ENCODE measurements at regions of chr14 and their contacts with region 1.

Region 1: DNA sequence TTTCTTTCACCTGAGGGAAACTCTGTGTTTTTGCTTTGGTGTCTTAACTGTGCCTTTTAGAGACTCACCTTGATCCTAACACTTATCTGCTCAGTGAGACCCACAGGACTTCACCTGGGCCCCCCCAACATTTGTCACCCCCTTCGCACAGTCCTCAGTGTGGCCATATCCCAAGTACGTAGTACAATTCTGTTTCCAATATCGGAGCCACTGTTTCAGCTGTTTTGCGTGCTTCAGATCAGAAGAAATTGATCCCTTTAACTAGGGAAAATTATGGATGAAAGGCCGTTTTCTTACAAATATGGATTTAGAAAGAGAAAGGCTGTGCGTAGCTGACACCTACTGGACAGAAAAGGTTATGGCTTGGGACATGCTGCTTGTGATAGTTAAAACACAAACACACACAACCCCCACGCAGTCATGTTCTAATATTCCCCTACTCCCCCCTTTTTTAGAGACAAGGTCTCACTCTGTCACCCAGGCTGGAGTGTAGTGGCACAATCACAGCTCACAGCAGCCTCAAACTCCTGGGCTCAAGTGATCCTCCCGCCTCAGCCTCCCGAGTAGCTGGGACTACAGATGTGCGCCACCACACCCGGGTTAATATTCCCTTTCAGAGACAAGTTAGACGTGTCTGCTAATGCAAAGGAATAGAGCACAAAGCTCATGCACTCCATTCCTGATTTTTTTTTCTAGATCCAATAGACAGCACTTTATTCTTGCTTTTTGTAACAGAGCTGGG is 3.6 kb upstream of the SLC7A8 start:
- DNase-seq: no peak
- ATAC-seq: peak; percentile 57

Region 2: DNA sequence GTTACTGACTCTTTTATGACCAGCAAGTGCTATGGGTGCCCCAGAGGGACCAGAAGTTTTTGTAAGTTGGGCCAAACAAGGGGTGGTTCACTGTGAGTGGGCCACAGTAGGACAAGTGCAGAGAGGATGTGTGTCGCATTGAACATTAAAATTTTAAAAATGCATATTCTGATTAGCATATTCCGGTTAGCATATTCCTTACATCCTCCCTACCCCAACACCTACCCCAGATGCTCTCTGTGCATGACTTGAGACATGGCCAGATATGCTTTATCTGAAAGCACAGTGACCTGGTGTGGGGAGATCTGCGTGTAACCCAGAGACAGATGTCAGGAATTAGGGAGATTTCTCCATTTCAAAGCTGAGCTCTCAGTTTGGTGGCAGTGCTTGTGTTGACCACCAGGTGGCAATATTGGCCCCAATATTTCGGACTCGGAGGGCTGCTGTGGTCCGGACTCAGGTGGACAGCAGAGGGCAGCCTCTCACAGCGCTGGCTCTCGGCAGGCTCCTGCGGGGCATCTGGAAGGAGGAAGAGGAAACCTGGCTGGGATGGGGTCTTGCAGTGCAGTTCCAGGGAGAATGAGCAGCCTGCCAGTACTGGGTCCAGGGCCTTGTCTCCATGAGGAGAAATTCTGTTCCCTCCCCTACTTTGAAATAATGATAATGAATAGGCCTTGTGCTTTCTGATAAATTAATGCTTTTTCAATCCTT is 66.4 kb before region 1 on chr14:
- intact Hi-C with region 1: loop called (anchors 1 kb)
- DNase-seq: peak; percentile 92
- ATAC-seq: peak; percentile 81

Measured in left ventricle myocardium superior (tissue), 1 donor.